Cardiac septum (tissue), 1 donor: ENCODE measurements at regions of chr12 and their contacts with region 1.

Region 1: DNA sequence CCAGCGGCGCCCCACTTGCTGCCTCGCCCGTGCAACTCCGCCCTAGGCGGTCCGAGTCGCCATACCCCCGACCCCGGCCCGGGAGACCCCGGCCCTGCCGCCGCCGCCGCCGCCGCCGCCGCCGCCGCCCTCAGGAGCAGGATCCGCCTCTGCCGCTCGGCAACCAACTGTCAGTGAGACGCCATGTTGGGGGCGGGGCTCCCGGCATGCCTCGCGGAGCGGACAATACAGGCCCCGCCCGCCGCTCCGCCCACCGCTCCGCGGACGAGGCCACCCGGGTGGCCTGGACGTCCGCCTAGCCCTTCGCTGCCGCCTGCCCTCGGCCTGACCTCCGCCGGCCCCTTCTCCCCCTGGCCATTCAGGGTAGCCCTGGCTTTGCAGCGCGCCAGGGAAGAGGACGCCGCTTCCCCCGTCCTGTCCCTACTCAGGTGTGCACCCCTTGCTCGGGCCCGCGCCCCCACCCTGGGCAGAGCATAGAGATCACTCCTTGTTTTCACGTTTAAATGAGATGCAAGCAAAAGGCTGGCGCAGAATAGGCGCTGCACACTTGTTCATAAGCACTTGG is at the start of gene HECTD4:
- DNase-seq: peak; percentile 97
- total RNA-seq, gene HECTD4: 28.2 TPM

Region 2: DNA sequence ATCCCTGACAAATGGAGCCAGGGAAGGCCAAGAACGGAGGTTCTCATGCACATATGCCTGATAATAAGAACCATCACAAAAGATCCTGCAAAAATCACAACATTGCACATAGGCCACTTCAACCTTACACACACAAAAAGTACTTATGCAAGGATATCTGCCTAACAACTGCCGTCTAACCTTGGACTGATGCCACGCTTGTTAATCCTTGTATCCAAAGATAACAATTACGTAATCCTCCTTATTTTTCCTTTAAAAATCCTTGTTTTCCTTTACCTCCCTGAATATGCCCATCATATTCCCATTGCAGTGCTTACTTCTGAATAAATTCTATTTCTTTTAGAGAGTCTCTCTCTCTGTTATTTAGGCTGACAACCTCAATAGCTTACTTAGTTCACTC is 428.9 kb before region 1 on chr12:
- intact Hi-C with region 1: no loop called
- DNase-seq: no peak

Region 3: DNA sequence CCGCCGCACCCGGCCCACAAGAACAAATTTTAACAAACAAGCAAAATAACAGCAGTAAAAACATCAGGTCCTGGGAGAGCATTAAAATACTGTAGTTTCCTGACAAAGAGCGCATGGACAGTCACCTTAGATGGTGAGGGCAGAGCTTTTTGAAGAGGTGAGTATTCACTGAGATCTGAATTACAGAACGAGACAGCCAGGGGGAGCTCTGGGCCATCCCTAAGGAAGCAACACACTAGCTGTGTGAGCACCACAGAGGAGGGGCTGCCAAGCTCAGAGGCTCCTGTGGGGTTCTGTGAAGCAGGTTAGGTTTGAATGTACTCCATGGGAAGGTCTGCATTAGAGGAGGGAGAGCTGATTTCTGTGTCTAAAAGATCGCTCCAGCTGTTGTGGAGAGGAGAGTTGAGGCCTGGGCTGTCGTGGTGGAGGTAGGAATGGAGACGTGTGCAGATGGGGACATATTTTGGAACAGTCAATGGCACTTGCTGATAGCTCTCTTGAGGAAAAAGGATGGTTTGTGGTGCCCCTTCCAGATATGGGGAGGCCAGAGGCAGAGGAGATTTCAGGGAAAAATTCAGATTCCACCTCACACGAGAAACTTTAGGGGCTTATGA is 184.1 kb before region 1 on chr12:
- intact Hi-C with region 1: loop called (anchors 2 kb)
- DNase-seq: no peak

Region 4: DNA sequence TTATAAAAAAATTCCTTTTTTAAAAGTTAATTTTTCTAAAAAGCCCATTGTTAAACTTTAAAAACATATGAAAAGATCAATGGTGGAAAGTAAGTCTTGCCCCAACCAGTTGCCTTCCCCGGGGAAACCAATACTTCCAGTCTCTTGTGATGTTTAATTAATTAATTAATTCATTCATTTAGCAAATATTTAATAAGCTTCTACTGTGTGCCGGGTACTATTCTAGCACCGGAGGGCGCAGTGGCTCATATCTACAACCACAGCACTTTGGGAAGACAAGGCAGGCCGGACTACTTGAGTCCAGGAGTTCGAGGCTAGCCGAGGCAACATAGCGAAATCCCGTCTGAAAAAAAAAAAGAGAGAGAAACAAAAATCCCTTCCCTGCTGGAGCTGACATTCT is 87.5 kb before region 1 on chr12:
- intact Hi-C with region 1: loop called (anchors 10 kb)
- DNase-seq: no peak